Heart left ventricle (tissue), 16 donors: ENCODE measurements at regions of chr5 and their contacts with region 1.

Region 1: DNA sequence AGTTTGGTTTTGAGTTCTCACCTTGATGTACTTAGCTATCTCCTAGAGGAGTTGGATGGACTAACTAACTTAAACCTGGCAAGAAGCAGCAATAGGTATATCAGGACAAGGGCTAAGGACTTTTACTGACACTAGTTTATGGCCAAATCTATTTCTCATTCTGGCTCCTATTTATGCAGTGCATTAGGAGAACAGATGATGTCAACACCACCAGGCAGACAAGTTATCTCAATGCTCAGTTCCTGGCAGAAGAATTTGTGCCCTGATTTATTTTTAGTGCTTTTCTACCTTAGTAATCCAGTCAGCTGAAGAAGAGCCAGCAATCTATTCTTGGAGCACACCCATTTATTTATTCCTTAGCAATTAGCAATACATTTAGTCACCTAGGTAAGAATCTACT is 30.7 kb upstream of the MYOT start:
- DNase-seq: peak in 1 of 5 donors; percentile 35
- ATAC-seq: peak; percentile 79 to 92 (median 89)
- H3K4me3 ChIP-seq: no peak overlapping the region
- H3K27ac ChIP-seq: peak overlapping the region; percentile 59 to 96 (median 82)
- H3K4me1 ChIP-seq: peaks cover 0 to 65% (median 23%) of the 10 kb centered on the region in 12 donors
- H3K27me3 ChIP-seq: no peaks in the 10 kb centered on the region
- CTCF ChIP-seq: no peak
- POLR2A ChIP-seq: no peak

Region 2: DNA sequence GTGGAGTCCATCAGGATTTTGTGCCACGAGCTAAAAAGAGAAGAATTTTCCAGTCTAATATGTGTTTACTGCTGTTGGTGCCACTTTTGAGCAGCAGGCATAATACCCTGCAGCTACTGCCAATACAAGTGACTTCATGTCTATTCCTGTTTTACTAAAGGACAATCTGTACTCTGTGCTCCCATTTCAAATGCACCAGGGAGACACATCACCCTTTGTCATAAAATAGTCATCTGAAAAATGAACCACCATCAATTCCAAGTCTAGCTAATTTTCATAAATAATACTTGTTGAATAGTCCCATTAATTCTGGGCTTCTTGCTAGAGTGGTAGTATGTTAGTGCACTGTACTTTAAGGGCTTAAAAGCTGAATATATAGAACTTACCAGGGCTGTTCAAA is 43.3 kb after region 1 on chr5:
- intact Hi-C with region 1: loop called in 3 of 10 experiments (anchors 5 kb)
- DNase-seq: no peak
- ATAC-seq: peak; percentile 95 to 97 (median 96)
- H3K4me3 ChIP-seq: peak overlapping the region in 5 of 12 donors; percentile 4 to 27 (median 7)
- H3K27ac ChIP-seq: peak overlapping the region; percentile 63 to 91 (median 76)
- H3K4me1 ChIP-seq: peaks cover 0 to 8% (median 1%) of the 10 kb centered on the region in 12 donors
- H3K27me3 ChIP-seq: no peaks in the 10 kb centered on the region
- CTCF ChIP-seq: no peak
- POLR2A ChIP-seq: peak in 1 of 2 donors; percentile 52

Region 3: DNA sequence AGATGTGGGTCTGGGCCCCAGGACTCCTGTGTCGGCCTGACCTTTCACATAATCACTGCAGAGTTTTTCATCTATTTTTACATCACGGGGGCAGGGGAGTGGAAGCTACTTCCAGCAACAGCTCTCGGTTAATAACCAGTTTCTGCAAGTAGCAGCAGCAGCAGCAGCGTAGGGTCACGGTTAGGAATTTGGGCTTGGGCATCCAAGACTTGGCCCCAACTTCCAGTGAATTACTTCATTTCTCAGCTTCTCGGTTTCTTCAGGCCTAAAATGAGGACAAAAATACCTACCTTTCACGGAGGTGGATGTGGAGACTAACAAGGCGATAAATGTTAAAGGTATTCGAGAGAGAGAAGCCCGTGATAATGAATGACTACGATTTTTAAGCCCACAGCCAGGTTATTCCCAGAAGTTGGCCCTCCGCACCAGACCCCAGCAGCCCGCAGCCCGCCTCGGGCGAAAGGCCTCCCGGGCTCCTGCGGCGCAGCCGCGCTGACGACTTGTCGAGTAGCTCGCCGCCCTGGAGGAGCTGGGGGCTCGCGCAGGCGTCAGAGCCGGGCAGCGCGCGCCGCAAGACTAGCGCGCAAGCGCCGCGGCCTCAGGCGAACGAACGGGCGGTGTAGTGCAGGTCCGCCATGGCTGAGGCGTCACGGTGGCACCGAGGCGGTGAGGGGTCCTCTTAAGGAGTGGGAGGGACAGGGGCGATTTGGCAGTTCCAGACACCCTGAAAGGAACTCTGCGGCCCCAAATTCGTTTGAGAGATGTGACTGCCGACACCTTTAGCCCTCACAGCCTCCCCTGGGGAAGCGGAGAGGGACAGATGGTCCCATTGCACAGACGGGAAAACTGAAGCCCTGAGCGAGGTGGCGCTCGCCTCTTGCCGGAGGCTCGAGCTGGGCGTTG is 52.1 kb after region 1 on chr5 and contains the start of gene PKD2L2:
- intact Hi-C with region 1: loop called in 4 of 10 experiments (anchors 2 to 5 kb)
- DNase-seq: peak; percentile 87 to 94 (median 93)
- ATAC-seq: peak; percentile 89 to 98 (median 96)
- H3K4me3 ChIP-seq: peak within 1 kb of the TSS; percentile 21 to 72 (median 59)
- H3K27ac ChIP-seq: peak within 1 kb of the TSS; percentile 82 to 96 (median 91)
- H3K4me1 ChIP-seq: peaks cover 0 to 33% (median 11%) of the 10 kb centered on the region in 12 donors
- H3K27me3 ChIP-seq: no peaks in the 10 kb centered on the region
- CTCF ChIP-seq: peak in 5 of 12 donors; percentile 4 to 26 (median 14)
- POLR2A ChIP-seq: peak; percentile 44 to 78
- total RNA-seq, gene PKD2L2: 0.37 to 1.1 (median 0.52) TPM in 8 of 9 donors, not detected in the other

Region 4: DNA sequence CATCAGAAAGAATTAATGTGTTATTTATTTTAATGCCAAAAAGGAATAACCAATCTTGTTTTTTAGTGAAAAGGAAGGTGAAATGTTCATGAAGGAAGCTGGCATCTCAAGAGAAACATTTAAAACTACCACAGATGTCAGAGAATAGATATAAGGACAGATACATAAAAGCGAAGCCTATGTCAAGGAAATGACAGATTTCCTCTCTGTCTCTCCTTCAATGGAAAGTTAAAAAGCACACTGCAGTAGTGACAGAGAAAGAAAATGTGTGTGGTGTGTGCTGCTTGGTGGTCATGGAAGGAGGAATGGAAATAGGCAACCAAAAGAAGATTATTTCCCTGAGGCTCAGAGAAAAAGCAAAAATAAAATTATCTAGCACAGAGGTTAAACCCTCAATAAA is 256.0 kb after region 1 on chr5:
- intact Hi-C with region 1: no loop called
- DNase-seq: no peak
- ATAC-seq: no peak
- H3K4me3 ChIP-seq: no peak overlapping the region
- H3K27ac ChIP-seq: no peak overlapping the region
- H3K4me1 ChIP-seq: no peaks in the 10 kb centered on the region
- H3K27me3 ChIP-seq: peaks cover 0 to 9% (median 0%) of the 10 kb centered on the region in 9 donors
- CTCF ChIP-seq: no peak
- POLR2A ChIP-seq: no peak